ENCODE measurements at regions of chr2 and their contacts with region 1.

Region 1: GRCh38 chr2:108640731-108641130 is 78.6 kb upstream of the RANBP2 start:
- DNase-seq: no peak
- ATAC-seq: no peak

Region 2: GRCh38 chr2:108607706-108608301 is 32.9 kb before region 1 on chr2:
- intact Hi-C with region 1: loop called in 1 of 2 experiments (anchors 5 kb)
- DNase-seq: peak; percentile 33
- ATAC-seq: peak; percentile 44 to 54

Region 3: DNA sequence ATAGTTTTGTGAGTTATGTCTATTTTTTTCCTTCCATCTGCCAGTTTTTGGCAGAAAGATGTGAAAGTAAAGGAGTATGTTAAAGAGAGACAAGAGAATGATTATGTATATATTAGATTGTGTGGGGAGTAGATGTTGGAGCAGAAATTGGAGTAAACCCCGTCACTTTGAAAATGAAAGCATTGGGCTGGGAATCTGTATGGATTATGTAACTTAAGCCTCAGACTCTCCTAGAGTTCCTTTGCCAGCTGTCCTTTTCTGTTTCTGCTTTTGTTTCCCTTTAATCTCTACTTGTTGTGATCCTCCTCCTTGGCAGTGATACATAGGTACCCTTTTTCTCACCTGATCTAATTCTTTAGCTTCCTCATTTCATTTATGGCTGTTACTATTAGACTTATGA is 165.1 kb after region 1 on chr2:
- intact Hi-C with region 1: no loop called
- DNase-seq: no peak
- ATAC-seq: no peak

Region 4: DNA sequence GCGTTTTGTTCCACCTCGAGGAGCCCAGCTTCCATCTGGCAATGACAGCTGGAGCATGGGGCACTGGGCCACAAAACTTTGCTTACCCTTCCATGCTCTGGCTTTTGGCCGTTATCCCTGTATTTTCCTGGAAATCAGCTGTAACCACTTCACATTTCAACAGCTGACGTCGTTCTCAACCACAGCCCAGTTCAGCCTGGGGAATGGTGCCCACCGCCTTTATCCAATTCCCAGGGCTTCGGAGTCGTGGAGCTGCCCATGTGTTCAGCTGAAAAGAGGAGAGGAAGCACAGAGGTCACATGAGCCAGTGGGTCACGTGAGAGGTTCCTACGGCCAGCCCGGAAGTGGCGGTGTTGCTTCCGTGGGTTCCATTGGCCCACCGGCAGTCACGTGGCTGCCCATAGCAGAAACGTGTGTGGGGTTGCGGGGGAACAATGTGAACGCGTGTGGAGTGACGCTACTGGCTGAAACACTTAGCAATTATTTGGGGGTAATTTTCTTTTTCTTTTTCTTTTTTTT is 365.0 kb after region 1 on chr2:
- intact Hi-C with region 1: no loop called
- DNase-seq: peak; percentile 67
- ATAC-seq: peak; percentile 33 to 92

Measured in left cardiac atrium (tissue), 4 donors.